Naive thymus-derived CD4-positive, alpha-beta T cell (primary cell): ENCODE measurements at regions of chr2 and their contacts with region 1.

Region 1: DNA sequence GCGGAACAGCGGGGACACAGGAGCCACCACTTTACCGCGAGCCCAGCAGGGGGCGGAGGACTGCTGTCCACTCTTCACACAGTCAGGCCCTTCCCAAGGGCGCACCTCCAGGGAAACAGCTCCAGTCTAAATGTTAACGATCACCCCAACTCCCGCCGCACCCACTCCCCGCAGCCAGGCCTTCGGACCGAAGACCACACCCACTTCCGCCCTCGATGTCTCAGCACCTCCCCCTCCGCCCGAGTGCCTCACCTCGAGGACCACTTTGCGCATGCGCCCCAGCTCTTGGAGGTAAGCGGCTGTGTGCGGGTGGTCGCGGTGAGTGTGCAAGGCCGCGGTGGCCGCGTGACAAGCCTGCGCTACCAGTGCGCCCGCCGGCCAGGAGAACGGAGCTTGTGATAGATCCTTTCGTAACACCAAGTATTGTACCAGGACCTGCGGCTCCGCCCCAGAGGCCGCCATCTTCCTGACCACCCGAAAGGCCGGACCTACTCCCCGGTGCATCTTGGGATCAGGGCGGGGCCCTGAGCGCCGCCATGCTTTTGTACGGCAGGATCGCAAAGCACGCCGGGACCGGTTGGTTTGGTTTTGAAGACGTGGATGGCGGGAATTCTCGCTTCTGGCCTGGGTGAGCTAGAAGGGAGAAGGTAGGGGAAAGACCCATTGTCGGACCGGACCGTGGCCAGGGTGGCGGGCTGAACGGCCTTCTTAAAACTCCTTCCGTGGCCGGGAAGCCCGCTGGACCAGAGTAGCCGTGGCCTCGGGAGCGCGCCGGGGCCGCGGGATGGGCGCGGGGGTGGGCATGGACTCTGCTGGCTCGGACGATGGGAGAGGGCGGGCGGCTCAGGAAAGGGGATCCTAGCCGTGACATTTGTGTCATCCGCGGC is at the starts of genes CENPO and PTRHD1:
- DNase-seq: peak; percentile 93 to 99 (median 97)
- ATAC-seq: peak; percentile 98
- H3K4me3 ChIP-seq: peak within 1 kb of the TSS; percentile 97
- H3K4me3 Mint-ChIP-seq: peak within 1 kb of the TSS; percentile 95 to 100 (median 98)
- H3K27ac ChIP-seq: peak within 1 kb of the TSS; percentile 96
- H3K27ac Mint-ChIP-seq: peak within 1 kb of the TSS; percentile 99 to 100 (median 99)
- H3K4me1 ChIP-seq: peaks cover 6 to 10% of the 10 kb centered on the region in 2 donors
- H3K4me1 Mint-ChIP-seq: peaks cover 5 to 53% (median 20%) of the 10 kb centered on the region in 7 donors
- H3K27me3 ChIP-seq: no peaks in the 10 kb centered on the region
- H3K27me3 Mint-ChIP-seq: no peaks in the 10 kb centered on the region
- total RNA-seq, gene CENPO: 3.6 to 36.6 (median 6.0) TPM
- total RNA-seq, gene PTRHD1: 14.3 to 31.5 (median 17.1) TPM

Region 2: GRCh38 chr2:24833821-24834732 is 41.0 kb after region 1 on chr2:
- CTCF ChIA-PET with region 1: no interaction called
- POLR2A ChIA-PET with region 1: no interaction called
- intact Hi-C with region 1: no loop called
- DNase-seq: no peak
- ATAC-seq: no peak
- H3K4me3 ChIP-seq: no peak overlapping the region
- H3K4me3 Mint-ChIP-seq: no peak overlapping the region
- H3K27ac ChIP-seq: no peak overlapping the region
- H3K27ac Mint-ChIP-seq: no peak overlapping the region
- H3K4me1 ChIP-seq: no peaks in the 10 kb centered on the region
- H3K4me1 Mint-ChIP-seq: no peaks in the 10 kb centered on the region
- H3K27me3 ChIP-seq: no peaks in the 10 kb centered on the region
- H3K27me3 Mint-ChIP-seq: no peaks in the 10 kb centered on the region

Region 3: DNA sequence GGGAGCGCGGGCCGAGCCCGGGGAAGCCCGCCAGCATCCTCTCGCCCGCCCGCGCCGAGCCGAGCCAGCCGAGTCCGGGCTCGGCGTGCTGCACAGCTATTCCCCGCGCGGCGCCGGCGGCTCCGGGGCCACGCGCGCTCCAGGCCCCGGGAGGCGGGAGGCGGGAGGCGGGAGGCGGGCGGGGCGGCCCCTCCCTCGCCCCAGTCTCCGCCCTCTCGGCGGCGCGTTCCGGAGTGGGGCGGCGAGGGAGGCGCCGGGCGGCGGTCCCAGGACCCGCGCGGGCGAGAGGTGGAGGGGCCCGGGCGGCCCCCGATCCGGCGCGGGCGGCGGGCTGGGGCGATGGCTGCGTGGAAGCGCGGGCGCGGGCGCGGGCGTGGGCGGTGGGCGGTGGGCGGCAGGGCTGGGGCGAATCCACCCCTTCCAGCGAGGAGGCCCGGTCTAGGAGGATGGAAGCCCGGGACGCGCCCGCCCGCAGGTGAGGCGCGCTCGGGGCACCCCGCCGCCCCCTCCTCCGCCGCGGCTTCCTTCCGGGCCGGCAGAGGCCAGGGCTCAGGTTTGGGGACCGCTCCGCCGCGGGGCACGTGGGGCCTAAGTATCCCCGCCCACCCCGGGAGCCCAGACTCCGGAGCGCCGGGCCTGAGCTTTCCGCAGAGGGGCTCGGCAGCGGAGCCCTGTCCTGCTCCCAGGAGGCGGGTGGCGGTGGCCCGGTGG is 127.1 kb after region 1 on chr2 and contains the start of gene ADCY3:
- CTCF ChIA-PET with region 1: no interaction called
- POLR2A ChIA-PET with region 1: no interaction called
- intact Hi-C with region 1: loop called (anchors 2 to 10 kb)
- DNase-seq: peak; percentile 24 to 76 (median 48)
- ATAC-seq: peak; percentile 74
- H3K4me3 ChIP-seq: peak within 1 kb of the TSS; percentile 40
- H3K4me3 Mint-ChIP-seq: peak within 1 kb of the TSS; percentile 85 to 93 (median 92)
- H3K27ac ChIP-seq: peak within 1 kb of the TSS; percentile 55
- H3K27ac Mint-ChIP-seq: peak within 1 kb of the TSS; percentile 45 to 82 (median 67)
- H3K4me1 ChIP-seq: peaks cover 16 to 17% of the 10 kb centered on the region in 2 donors
- H3K4me1 Mint-ChIP-seq: peaks cover 18 to 40% (median 32%) of the 10 kb centered on the region in 7 donors
- H3K27me3 ChIP-seq: no peaks in the 10 kb centered on the region
- H3K27me3 Mint-ChIP-seq: peaks cover 0 to 4% (median 0%) of the 10 kb centered on the region in 5 donors
- total RNA-seq, gene ADCY3: 4.4 to 44.7 (median 18.7) TPM

Region 4: GRCh38 chr2:25161055-25161781 is 368.1 kb after region 1 on chr2:
- CTCF ChIA-PET with region 1: no interaction called
- POLR2A ChIA-PET with region 1: no interaction called
- intact Hi-C with region 1: no loop called
- DNase-seq: peak; percentile 30 to 74 (median 48)
- ATAC-seq: peak; percentile 72
- H3K4me3 ChIP-seq: peak overlapping the region; percentile 52
- H3K4me3 Mint-ChIP-seq: peak overlapping the region; percentile 48 to 82 (median 70)
- H3K27ac ChIP-seq: peak overlapping the region; percentile 67
- H3K27ac Mint-ChIP-seq: peak overlapping the region in 8 of 9 donors; percentile 30 to 83 (median 68)
- H3K4me1 ChIP-seq: peaks cover 9% of the 10 kb centered on the region in 2 donors
- H3K4me1 Mint-ChIP-seq: peaks cover 12 to 29% (median 19%) of the 10 kb centered on the region in 7 donors
- H3K27me3 ChIP-seq: no peaks in the 10 kb centered on the region
- H3K27me3 Mint-ChIP-seq: peaks cover 0 to 25% (median 0%) of the 10 kb centered on the region in 5 donors